IMR-90 (cell line): ENCODE measurements at regions of chr7 and their contacts with region 1.

Region 1: DNA sequence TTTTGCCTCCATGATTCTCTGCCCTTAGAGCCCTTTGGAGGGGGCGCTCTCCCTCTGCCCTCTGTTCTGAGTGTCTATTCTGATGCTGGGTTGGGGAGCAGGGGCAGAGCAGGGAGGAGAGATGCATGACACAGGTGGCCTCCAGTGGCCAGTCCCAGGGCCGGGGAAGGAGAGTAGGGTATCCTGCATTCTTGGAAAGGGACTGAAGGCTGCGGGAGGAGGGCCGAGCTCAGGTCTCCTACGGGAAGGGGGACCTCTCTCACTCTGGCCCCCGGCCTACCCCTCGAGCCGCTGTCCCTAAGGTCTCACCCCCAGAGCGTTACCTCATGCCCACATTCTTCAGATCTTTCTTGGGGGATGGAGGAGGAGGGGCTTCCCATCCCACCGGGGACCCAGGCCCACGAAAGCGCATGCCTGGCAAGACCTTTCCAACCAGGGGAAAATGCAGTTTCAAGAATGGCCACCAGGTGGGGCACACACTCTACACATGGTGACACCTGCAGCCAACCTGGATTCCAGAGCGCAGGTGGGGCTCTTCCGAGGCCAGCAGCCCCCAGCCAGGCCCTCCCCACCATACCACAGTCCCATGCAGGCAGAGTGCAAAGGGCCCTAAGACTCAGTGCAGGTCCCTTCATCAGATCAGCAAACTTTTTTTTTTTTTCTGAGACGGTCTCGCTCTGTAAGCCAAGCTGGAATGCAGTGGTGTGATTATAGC is 86.4 kb downstream of the MYL10 start:
- DNase-seq: peak; percentile 29
- ATAC-seq: peak; percentile 46; the same call in 1 of the 2 replicates
- H3K4me3 ChIP-seq: no peak overlapping the region
- H3K27ac ChIP-seq: no peak overlapping the region
- H3K4me1 ChIP-seq: peaks cover 2% of the 10 kb centered on the region; the same call in 1 of the 2 replicates
- H3K27me3 ChIP-seq: no peaks in the 10 kb centered on the region; the same call in 1 of the 2 replicates
- CTCF ChIP-seq: peak; percentile 80
- POLR2A ChIP-seq: no peak
- RAD21 ChIP-seq: peak; percentile 86

Region 2: GRCh38 chr7:100867040-100867775 is 675.5 kb before region 1 on chr7 and contains the start of gene TRIP6:
- CTCF ChIA-PET with region 1: no interaction called
- POLR2A ChIA-PET with region 1: no interaction called
- dilution Hi-C with region 1: no loop called
- in situ Hi-C with region 1: no loop called
- intact Hi-C with region 1: no loop called
- DNase-seq: peak; percentile 93
- ATAC-seq: peak; percentile 88
- H3K4me3 ChIP-seq: peak within 1 kb of the TSS; percentile 97
- H3K27ac ChIP-seq: peak within 1 kb of the TSS; percentile 99
- H3K4me1 ChIP-seq: peaks cover 18% of the 10 kb centered on the region
- H3K27me3 ChIP-seq: no peaks in the 10 kb centered on the region
- CTCF ChIP-seq: no peak
- POLR2A ChIP-seq: peak; percentile 78
- RAD21 ChIP-seq: no peak
- total RNA-seq, gene TRIP6: 36.4 and 39.2 TPM in 2 replicates

Region 3: GRCh38 chr7:101321491-101322401 is 220.9 kb before region 1 on chr7 and contains the start of gene IFT22:
- CTCF ChIA-PET with region 1: no interaction called
- POLR2A ChIA-PET with region 1: no interaction called
- dilution Hi-C with region 1: no loop called
- in situ Hi-C with region 1: no loop called
- intact Hi-C with region 1: loop called (anchors 1 kb)
- DNase-seq: peak; percentile 85
- ATAC-seq: peak; percentile 98
- H3K4me3 ChIP-seq: peak within 1 kb of the TSS; percentile 98
- H3K27ac ChIP-seq: peak within 1 kb of the TSS; percentile 90
- H3K4me1 ChIP-seq: no peaks in the 10 kb centered on the region
- H3K27me3 ChIP-seq: no peaks in the 10 kb centered on the region
- CTCF ChIP-seq: peak; percentile 36
- POLR2A ChIP-seq: no peak
- RAD21 ChIP-seq: no peak
- total RNA-seq, gene IFT22: 23.1 and 34.1 TPM in 2 replicates

Region 4: GRCh38 chr7:101363734-101364374 is 178.8 kb before region 1 on chr7:
- CTCF ChIA-PET with region 1: no interaction called
- POLR2A ChIA-PET with region 1: no interaction called
- dilution Hi-C with region 1: no loop called
- in situ Hi-C with region 1: no loop called
- intact Hi-C with region 1: loop called (anchors 5 kb)
- DNase-seq: peak; percentile 40
- ATAC-seq: peak; percentile 95
- H3K4me3 ChIP-seq: peak overlapping the region; percentile 31
- H3K27ac ChIP-seq: no peak overlapping the region
- H3K4me1 ChIP-seq: no peaks in the 10 kb centered on the region
- H3K27me3 ChIP-seq: peaks cover 36% of the 10 kb centered on the region
- CTCF ChIP-seq: peak; percentile 78
- POLR2A ChIP-seq: no peak
- RAD21 ChIP-seq: peak; percentile 68

Region 5: DNA sequence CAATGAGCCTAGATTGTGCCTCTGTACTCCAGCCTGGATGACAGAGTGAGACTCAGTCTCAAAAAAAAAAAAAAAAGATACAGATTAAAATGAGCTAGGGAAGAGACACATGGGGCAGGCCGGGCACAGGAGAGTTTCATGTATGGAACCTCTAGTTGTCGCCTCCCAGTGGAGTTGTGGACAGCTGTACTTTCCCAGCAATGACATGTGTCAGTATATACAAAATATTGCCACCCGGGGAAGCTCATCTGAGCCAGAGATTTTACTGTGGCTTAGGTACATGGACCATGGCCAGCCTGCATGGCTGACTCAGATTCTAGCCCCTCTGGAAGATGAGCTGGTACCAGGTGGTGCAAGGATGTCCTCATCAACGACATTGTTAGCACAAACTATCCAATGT is 92.6 kb before region 1 on chr7:
- CTCF ChIA-PET with region 1: no interaction called
- POLR2A ChIA-PET with region 1: no interaction called
- dilution Hi-C with region 1: no loop called
- in situ Hi-C with region 1: no loop called
- intact Hi-C with region 1: no loop called
- DNase-seq: no peak
- ATAC-seq: no peak
- H3K4me3 ChIP-seq: no peak overlapping the region
- H3K27ac ChIP-seq: no peak overlapping the region
- H3K4me1 ChIP-seq: no peaks in the 10 kb centered on the region
- H3K27me3 ChIP-seq: peaks cover 37% of the 10 kb centered on the region
- CTCF ChIP-seq: no peak
- POLR2A ChIP-seq: no peak
- RAD21 ChIP-seq: no peak

Region 6: GRCh38 chr7:101998648-101999191 is 456.0 kb after region 1 on chr7:
- CTCF ChIA-PET with region 1: no interaction called
- POLR2A ChIA-PET with region 1: no interaction called
- dilution Hi-C with region 1: no loop called
- in situ Hi-C with region 1: no loop called
- intact Hi-C with region 1: no loop called
- DNase-seq: no peak
- ATAC-seq: no peak
- H3K4me3 ChIP-seq: no peak overlapping the region
- H3K27ac ChIP-seq: no peak overlapping the region
- H3K4me1 ChIP-seq: peaks cover 2% of the 10 kb centered on the region; the same call in 1 of the 2 replicates
- H3K27me3 ChIP-seq: no peaks in the 10 kb centered on the region
- CTCF ChIP-seq: no peak
- POLR2A ChIP-seq: no peak
- RAD21 ChIP-seq: no peak

Region 7: GRCh38 chr7:102236592-102237287 is 694.1 kb after region 1 on chr7:
- CTCF ChIA-PET with region 1: no interaction called
- POLR2A ChIA-PET with region 1: no interaction called
- dilution Hi-C with region 1: no loop called
- in situ Hi-C with region 1: no loop called
- intact Hi-C with region 1: loop called (anchors 1 kb)
- DNase-seq: peak; percentile 56
- ATAC-seq: peak; percentile 95
- H3K4me3 ChIP-seq: no peak overlapping the region
- H3K27ac ChIP-seq: no peak overlapping the region
- H3K4me1 ChIP-seq: peaks cover 2% of the 10 kb centered on the region; the same call in 1 of the 2 replicates
- H3K27me3 ChIP-seq: no peaks in the 10 kb centered on the region
- CTCF ChIP-seq: peak; percentile 85
- POLR2A ChIP-seq: no peak
- RAD21 ChIP-seq: peak; percentile 95

Region 8: GRCh38 chr7:102272075-102272917 is 729.6 kb after region 1 on chr7:
- CTCF ChIA-PET with region 1: interaction called, 11 read pairs
- POLR2A ChIA-PET with region 1: no interaction called
- dilution Hi-C with region 1: no loop called
- in situ Hi-C with region 1: loop called (anchors 5 kb)
- intact Hi-C with region 1: loop called (anchors 1 kb)
- DNase-seq: peak; percentile 81
- ATAC-seq: peak; percentile 89
- H3K4me3 ChIP-seq: no peak overlapping the region
- H3K27ac ChIP-seq: no peak overlapping the region
- H3K4me1 ChIP-seq: peaks cover 12% of the 10 kb centered on the region
- H3K27me3 ChIP-seq: no peaks in the 10 kb centered on the region
- CTCF ChIP-seq: peak; percentile 94
- POLR2A ChIP-seq: no peak
- RAD21 ChIP-seq: peak; percentile 94